Thyroid gland (tissue), 4 donors: ENCODE measurements at regions of chr13 and their contacts with region 1.

Region 1: GRCh38 chr13:59391696-59392095 is 772.0 kb downstream of the DIAPH3 start:
- DNase-seq: peak; percentile 37 to 50
- H3K4me3 ChIP-seq: no peak overlapping the region
- H3K27ac ChIP-seq: no peak overlapping the region
- H3K4me1 ChIP-seq: no peaks in the 10 kb centered on the region
- H3K27me3 ChIP-seq: no peaks in the 10 kb centered on the region
- CTCF ChIP-seq: peak; percentile 54 to 90 (median 71)
- POLR2A ChIP-seq: no peak

Region 2: DNA sequence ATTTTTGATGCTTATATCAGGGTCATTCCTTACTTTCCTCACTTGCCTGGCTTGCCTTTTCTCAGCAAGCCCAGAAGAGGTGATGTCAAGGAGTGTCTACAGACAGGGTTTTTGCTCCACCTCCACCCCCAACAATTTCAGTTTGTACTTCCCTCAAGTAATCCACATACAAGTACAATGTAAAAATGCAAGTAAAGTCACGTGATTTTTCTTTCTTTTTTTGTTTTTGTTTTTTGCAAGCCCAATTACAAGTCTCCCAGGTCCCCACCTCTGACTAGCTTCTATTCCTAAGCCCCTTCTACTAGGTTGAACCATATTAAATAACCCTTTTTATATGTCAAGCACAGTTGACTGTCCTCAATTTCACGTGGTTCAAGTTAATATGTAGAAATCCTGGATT is 192.4 kb after region 1 on chr13:
- intact Hi-C with region 1: no loop called
- DNase-seq: no peak
- H3K4me3 ChIP-seq: no peak overlapping the region
- H3K27ac ChIP-seq: no peak overlapping the region
- H3K4me1 ChIP-seq: no peaks in the 10 kb centered on the region
- H3K27me3 ChIP-seq: no peaks in the 10 kb centered on the region
- CTCF ChIP-seq: no peak
- POLR2A ChIP-seq: no peak

Region 3: GRCh38 chr13:59677966-59678814 is 286.5 kb after region 1 on chr13:
- intact Hi-C with region 1: loop called (anchors 5 kb)
- DNase-seq: no peak
- H3K4me3 ChIP-seq: no peak overlapping the region
- H3K27ac ChIP-seq: no peak overlapping the region
- H3K4me1 ChIP-seq: no peaks in the 10 kb centered on the region
- H3K27me3 ChIP-seq: no peaks in the 10 kb centered on the region
- CTCF ChIP-seq: peak in 5 of 6 experiments; percentile 38 to 91 (median 79)
- POLR2A ChIP-seq: no peak

Region 4: DNA sequence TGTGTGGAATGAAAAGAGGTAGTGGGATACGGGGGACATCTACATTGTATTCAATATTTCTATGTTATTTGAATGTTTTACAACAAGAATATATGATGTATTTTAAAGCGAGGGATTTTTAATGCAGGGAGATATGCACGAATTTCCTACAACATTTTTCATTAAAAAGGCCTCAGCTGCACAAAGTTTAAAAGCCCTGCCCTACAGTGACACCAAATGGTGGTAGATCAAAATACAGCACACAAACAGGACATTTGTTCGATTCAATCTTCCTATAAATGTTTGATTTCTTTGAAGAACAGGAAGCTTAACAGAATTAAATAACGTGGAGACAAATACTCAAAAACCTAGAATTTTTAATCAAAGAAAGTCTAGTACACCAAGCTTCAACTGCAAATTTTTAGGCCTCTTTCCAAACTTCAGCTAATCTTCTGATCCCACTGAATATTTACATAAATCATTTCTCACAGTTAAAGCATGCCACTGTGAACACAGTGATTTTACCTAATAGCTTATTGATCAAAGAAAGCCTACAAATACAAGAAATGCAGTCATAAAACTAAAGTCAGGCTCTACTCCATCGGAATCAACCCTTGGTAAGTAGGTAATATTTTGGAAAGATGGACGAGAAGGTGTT is 514.8 kb after region 1 on chr13:
- intact Hi-C with region 1: loop called (anchors 10 kb)
- DNase-seq: no peak
- H3K4me3 ChIP-seq: no peak overlapping the region
- H3K27ac ChIP-seq: no peak overlapping the region
- H3K4me1 ChIP-seq: no peaks in the 10 kb centered on the region
- H3K27me3 ChIP-seq: no peaks in the 10 kb centered on the region
- CTCF ChIP-seq: peak in 3 of 6 experiments; percentile 38 to 47 (median 44)
- POLR2A ChIP-seq: no peak